ENCODE measurements at regions of chr11 and their contacts with region 1.

Region 1: DNA sequence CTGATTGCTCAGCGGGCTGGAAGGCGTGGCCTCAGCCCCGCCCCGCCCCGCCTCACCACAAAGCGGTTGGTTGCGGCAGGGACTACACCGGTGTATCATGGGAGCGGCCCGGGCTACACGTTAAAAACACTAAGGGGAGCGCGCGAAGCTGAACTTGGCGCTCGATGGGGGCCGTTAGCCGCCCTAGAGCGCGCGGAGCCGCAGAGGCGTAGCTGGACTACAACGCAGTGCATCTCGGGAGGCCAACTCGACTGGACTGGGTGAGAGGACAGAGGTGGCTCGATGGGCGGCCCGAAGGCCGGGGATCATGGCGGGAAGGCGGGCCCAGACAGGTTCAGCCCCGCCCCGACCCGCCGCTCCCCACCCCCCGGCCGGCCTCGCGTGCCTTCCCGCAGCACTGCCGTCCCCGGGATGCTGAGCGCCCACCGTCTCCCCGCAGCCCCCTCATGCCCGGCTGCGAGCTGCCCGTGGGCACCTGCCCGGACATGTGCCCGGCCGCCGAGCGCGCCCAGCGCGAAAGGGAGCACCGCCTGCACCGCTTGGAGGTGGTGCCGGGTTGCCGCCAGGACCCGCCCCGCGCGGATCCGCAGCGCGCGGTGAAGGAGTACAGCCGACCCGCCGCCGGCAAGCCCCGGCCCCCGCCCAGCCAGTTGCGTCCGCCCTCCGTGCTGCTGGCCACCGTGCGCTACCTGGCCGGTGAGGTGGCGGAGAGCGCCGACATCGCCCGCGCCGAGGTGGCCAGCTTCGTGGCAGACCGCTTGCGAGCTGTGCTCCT is at the start of gene SAC3D1:
- DNase-seq: peak; percentile 85
- ATAC-seq: peak; percentile 97
- H3K4me3 ChIP-seq: peak within 1 kb of the TSS; percentile 60 to 82
- H3K27ac ChIP-seq: peak within 1 kb of the TSS; percentile 93
- H3K4me1 ChIP-seq: peaks cover 16% of the 10 kb centered on the region
- H3K27me3 ChIP-seq: no peaks in the 10 kb centered on the region
- CTCF ChIP-seq: no peak
- total RNA-seq, gene SAC3D1: 55.6 TPM

Region 2: DNA sequence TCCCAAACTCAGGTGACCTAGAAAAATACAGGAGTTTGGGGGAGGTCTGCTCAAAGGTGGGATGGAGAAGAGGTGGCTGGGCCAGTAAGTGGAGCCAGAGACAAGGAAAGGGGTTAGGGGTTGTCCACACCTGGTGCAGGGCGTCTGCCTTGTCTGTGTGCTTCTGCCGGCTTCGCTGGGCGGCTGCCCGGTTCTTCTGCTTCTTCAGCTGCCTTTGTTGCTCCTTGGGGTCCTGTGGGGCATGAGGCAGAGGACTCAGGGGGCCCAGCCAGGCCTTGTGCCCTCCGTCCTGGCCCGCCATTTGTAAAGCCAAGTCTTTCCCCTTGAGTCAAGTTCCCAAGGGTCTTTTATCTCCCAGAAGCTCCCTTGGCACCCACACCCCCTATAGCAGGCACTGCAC is 46.7 kb before region 1 on chr11:
- CTCF ChIA-PET with region 1: no interaction called
- POLR2A ChIA-PET with region 1: no interaction called
- in situ Hi-C with region 1: no loop called
- intact Hi-C with region 1: no loop called
- DNase-seq: no peak
- ATAC-seq: no peak
- H3K4me3 ChIP-seq: no peak overlapping the region
- H3K27ac ChIP-seq: no peak overlapping the region
- H3K4me1 ChIP-seq: peaks cover 4% of the 10 kb centered on the region; the same call in 1 of the 2 replicates
- H3K27me3 ChIP-seq: no peaks in the 10 kb centered on the region
- CTCF ChIP-seq: no peak

Region 3: GRCh38 chr11:65051389-65051858 is 10.4 kb after region 1 on chr11:
- CTCF ChIA-PET with region 1: interaction called, 15 read pairs
- POLR2A ChIA-PET with region 1: interaction called, 11 read pairs
- in situ Hi-C with region 1: no loop called
- intact Hi-C with region 1: no loop called
- DNase-seq: no peak
- ATAC-seq: no peak
- H3K4me3 ChIP-seq: no peak overlapping the region
- H3K27ac ChIP-seq: no peak overlapping the region
- H3K4me1 ChIP-seq: no peaks in the 10 kb centered on the region
- H3K27me3 ChIP-seq: no peaks in the 10 kb centered on the region
- CTCF ChIP-seq: no peak

Region 4: GRCh38 chr11:65117216-65118096 is 76.4 kb after region 1 on chr11 and contains the start of gene ZNHIT2:
- CTCF ChIA-PET with region 1: no interaction called
- POLR2A ChIA-PET with region 1: no interaction called
- in situ Hi-C with region 1: no loop called
- intact Hi-C with region 1: no loop called
- DNase-seq: peak; percentile 99
- ATAC-seq: peak; percentile 77
- H3K4me3 ChIP-seq: peak within 1 kb of the TSS; percentile 70 to 78
- H3K27ac ChIP-seq: peak within 1 kb of the TSS; percentile 89
- H3K4me1 ChIP-seq: peaks cover 33% of the 10 kb centered on the region
- H3K27me3 ChIP-seq: no peaks in the 10 kb centered on the region
- CTCF ChIP-seq: peak; percentile 99
- total RNA-seq, gene ZNHIT2: 27.1 TPM

Measured in Panc1 (cell line).